Tibial artery (tissue), 4 donors: ENCODE measurements at regions of chr22 and their contacts with region 1.

Region 1: GRCh38 chr22:30289134-30289979 is at the start of gene CASTOR1:
- DNase-seq: peak; percentile 99 to 100
- H3K4me3 ChIP-seq: peak within 1 kb of the TSS; percentile 76 to 99
- H3K27ac ChIP-seq: peak within 1 kb of the TSS; percentile 89 to 99
- H3K4me1 ChIP-seq: peaks cover 17 to 52% (median 31%) of the 10 kb centered on the region in 4 donors
- H3K27me3 ChIP-seq: no peaks in the 10 kb centered on the region
- CTCF ChIP-seq: peak in 1 of 2 experiments; percentile 11

Region 2: GRCh38 chr22:30326706-30327362 is 37.5 kb after region 1 on chr22 and contains the start of gene TBC1D10A:
- intact Hi-C with region 1: loop called (anchors 2 kb)
- DNase-seq: peak; percentile 87 to 94
- H3K4me3 ChIP-seq: peak within 1 kb of the TSS; percentile 72 to 99
- H3K27ac ChIP-seq: peak within 1 kb of the TSS; percentile 84 to 92
- H3K4me1 ChIP-seq: peaks cover 0 to 49% (median 41%) of the 10 kb centered on the region in 4 donors
- H3K27me3 ChIP-seq: no peaks in the 10 kb centered on the region
- CTCF ChIP-seq: no peak

Region 3: DNA sequence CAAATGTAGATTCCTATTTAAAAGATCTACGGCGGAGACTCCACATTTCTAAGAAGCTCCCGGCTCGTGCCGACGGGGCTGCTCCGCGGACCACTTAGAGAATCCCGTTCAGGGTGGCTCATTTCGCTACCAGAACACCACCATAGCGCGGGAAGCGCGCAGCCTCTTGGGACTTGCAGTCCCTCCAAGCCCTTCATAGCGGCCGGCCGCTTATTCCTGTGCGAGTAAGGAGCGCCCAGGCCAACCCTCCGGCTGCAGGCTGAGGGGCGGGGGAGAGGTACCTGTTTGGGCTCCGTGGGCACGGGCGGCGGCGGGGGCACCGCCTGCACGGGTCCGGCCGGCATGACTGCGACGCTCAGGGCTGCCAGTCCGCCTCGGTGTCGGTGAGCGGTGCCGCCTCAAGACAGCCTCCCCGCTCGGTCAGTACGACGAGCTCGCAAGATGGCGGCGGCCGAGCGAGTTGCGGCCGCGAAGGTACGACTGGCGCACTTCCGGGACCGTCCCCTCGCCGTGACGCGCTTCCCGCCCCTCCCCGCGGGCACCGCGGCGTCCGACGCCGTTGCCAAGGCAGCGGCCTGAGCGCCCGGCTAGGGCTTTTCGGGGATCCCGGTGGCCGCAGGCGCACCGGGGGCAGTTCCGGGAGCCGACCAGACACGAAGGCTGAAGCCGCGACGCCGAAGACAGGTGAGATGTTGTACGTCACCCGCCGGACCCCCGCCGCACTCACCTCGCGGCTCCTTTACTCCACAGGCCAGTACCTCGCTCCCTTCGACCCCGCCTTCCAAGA is 67.3 kb after region 1 on chr22 and contains the starts of genes CCDC157 and SF3A1:
- intact Hi-C with region 1: loop called (anchors 2 kb)
- DNase-seq: peak; percentile 86 to 92
- H3K4me3 ChIP-seq: peak within 1 kb of the TSS; percentile 74 to 78
- H3K27ac ChIP-seq: peak within 1 kb of the TSS; percentile 93 to 96
- H3K4me1 ChIP-seq: peaks cover 0 to 36% (median 27%) of the 10 kb centered on the region in 4 donors
- H3K27me3 ChIP-seq: no peaks in the 10 kb centered on the region
- CTCF ChIP-seq: peak in 1 of 2 experiments; percentile 30

Region 4: GRCh38 chr22:30386960-30387827 is 97.8 kb after region 1 on chr22 and contains the start of gene RNF215:
- intact Hi-C with region 1: loop called (anchors 1 kb)
- DNase-seq: peak; percentile 65 to 91
- H3K4me3 ChIP-seq: peak within 1 kb of the TSS; percentile 60 to 62
- H3K27ac ChIP-seq: peak within 1 kb of the TSS; percentile 65 to 84
- H3K4me1 ChIP-seq: peaks cover 0 to 15% (median 12%) of the 10 kb centered on the region in 4 donors
- H3K27me3 ChIP-seq: no peaks in the 10 kb centered on the region
- CTCF ChIP-seq: peak; percentile 85 to 92